Testis (tissue), 5 donors: ENCODE measurements at regions of chr9 and their contacts with region 1.

Region 1: GRCh38 chr9:91424403-91425176 is 958 bp upstream of the NFIL3 start:
- DNase-seq: peak; percentile 91
- H3K4me3 ChIP-seq: peak overlapping the region; percentile 82 to 97
- H3K27ac ChIP-seq: peak overlapping the region; percentile 99
- H3K4me1 ChIP-seq: peaks cover 26% of the 10 kb centered on the region
- H3K27me3 ChIP-seq: no peaks in the 10 kb centered on the region
- CTCF ChIP-seq: peak in 2 of 3 experiments; percentile 11 to 25
- POLR2A ChIP-seq: no peak

Region 2: GRCh38 chr9:90914868-90915483 is 509.6 kb before region 1 on chr9:
- intact Hi-C with region 1: loop called (anchors 5 kb)
- DNase-seq: peak; percentile 79
- H3K4me3 ChIP-seq: no peak overlapping the region
- H3K27ac ChIP-seq: no peak overlapping the region
- H3K4me1 ChIP-seq: peaks cover 9% of the 10 kb centered on the region
- H3K27me3 ChIP-seq: no peaks in the 10 kb centered on the region
- CTCF ChIP-seq: peak; percentile 75 to 93 (median 86)
- POLR2A ChIP-seq: no peak

Region 3: GRCh38 chr9:91036826-91037510 is 387.6 kb before region 1 on chr9:
- intact Hi-C with region 1: loop called (anchors 5 kb)
- DNase-seq: peak; percentile 89
- H3K4me3 ChIP-seq: no peak overlapping the region
- H3K27ac ChIP-seq: no peak overlapping the region
- H3K4me1 ChIP-seq: peaks cover 15% of the 10 kb centered on the region
- H3K27me3 ChIP-seq: no peaks in the 10 kb centered on the region
- CTCF ChIP-seq: peak; percentile 37 to 50 (median 50)
- POLR2A ChIP-seq: no peak

Region 4: GRCh38 chr9:91483189-91483691 is 58.6 kb after region 1 on chr9:
- intact Hi-C with region 1: no loop called
- DNase-seq: no peak
- H3K4me3 ChIP-seq: no peak overlapping the region
- H3K27ac ChIP-seq: no peak overlapping the region
- H3K4me1 ChIP-seq: no peaks in the 10 kb centered on the region
- H3K27me3 ChIP-seq: no peaks in the 10 kb centered on the region
- CTCF ChIP-seq: no peak
- POLR2A ChIP-seq: no peak